ENCODE measurements at regions of chr12 and their contacts with region 1.

Region 1: GRCh38 chr12:24297516-24297915 is 348.0 kb upstream of the SOX5 start:
- DNase-seq: no peak
- H3K4me3 ChIP-seq: no peak overlapping the region
- H3K27ac ChIP-seq: no peak overlapping the region
- H3K4me1 ChIP-seq: no peaks in the 10 kb centered on the region
- CTCF ChIP-seq: no peak

Region 2: DNA sequence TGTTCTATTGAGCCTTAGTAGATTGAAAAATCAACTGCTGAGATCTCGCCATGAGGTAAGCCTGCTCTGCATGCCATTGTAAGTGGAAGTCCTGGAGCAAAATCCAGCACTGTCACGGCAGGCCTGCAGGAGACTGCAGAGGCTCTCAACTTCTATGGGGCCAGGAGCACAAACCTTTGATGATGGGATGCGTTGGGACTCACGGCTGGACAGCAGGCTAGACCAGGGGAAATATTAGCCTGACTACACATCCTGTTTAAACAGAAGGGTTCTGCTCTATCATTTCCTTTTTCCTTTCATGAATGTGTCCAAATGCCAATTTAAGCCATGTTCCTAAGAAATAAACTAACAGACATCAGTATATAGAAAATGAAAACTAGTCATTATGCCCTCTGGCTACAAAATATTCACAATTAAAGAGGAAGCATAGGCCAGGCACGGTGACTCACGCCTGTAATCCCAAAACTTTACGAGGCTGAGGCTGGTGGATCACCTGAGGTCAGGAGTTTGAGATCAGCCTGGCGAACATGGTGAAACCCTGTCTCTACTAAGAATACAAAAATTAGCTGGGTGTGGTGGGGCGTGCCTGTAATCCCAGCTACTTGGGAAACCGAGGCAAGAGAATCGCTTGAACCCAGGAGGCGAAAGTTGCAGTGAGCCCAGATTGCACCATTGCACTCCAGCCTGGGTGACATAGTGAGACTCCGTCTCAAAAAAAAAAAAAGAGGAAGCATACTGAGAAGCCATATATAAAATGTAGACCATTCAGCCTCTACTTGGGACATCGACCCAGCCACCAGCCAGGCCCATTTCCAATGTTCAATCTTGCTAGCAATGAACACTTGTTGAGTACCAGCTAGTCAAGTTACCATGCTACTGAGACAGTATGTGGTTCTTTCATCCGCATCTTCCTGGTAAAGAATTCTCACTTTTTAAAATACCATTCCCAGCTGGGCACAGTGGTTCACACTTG is 1627.3 kb after region 1 on chr12:
- CTCF ChIA-PET with region 1: no interaction called
- POLR2A ChIA-PET with region 1: interaction called, 12 read pairs
- intact Hi-C with region 1: no loop called
- DNase-seq: no peak
- H3K4me3 ChIP-seq: no peak overlapping the region
- H3K27ac ChIP-seq: no peak overlapping the region
- H3K4me1 ChIP-seq: no peaks in the 10 kb centered on the region
- CTCF ChIP-seq: no peak